ENCODE measurements at regions of chr1 and their contacts with region 1.

Region 1: GRCh38 chr1:193456811-193457280 is 270.4 kb upstream of the B3GALT2 start:
- DNase-seq: no peak
- H3K4me3 Mint-ChIP-seq: no peak overlapping the region
- H3K27ac Mint-ChIP-seq: no peak overlapping the region
- H3K4me1 Mint-ChIP-seq: peaks cover 25% of the 10 kb centered on the region
- H3K27me3 Mint-ChIP-seq: no peaks in the 10 kb centered on the region

Region 2: GRCh38 chr1:193437785-193438184 is 19.1 kb before region 1 on chr1:
- intact Hi-C with region 1: loop called (anchors 1 kb)
- DNase-seq: peak; percentile 32
- H3K4me3 Mint-ChIP-seq: peak overlapping the region; percentile 48
- H3K27ac Mint-ChIP-seq: peak overlapping the region; percentile 70
- H3K4me1 Mint-ChIP-seq: peaks cover 57% of the 10 kb centered on the region
- H3K27me3 Mint-ChIP-seq: no peaks in the 10 kb centered on the region

Region 3: DNA sequence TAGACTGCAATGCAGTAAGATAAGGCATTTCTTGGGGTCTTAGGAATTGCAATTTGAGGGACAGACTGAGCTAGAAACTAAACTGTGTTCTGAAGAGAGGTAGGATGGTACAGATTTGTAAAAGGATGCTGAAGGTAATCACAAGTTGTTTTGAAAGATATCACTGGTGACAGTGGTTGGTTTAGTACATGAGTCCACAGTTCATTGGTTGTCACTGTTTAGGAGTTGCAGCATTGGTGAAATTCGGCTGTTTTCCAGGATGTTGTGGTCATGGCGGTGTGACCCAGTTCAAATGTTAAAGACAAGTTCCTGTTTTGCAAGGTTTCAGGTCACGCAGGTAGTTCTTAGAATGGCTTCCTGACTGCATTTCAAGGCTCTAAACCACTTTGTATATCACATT is 22.3 kb after region 1 on chr1:
- intact Hi-C with region 1: loop called (anchors 1 kb)
- DNase-seq: peak; percentile 84
- H3K4me3 Mint-ChIP-seq: peak overlapping the region; percentile 30
- H3K27ac Mint-ChIP-seq: peak overlapping the region; percentile 86
- H3K4me1 Mint-ChIP-seq: peaks cover 78% of the 10 kb centered on the region
- H3K27me3 Mint-ChIP-seq: no peaks in the 10 kb centered on the region

Region 4: DNA sequence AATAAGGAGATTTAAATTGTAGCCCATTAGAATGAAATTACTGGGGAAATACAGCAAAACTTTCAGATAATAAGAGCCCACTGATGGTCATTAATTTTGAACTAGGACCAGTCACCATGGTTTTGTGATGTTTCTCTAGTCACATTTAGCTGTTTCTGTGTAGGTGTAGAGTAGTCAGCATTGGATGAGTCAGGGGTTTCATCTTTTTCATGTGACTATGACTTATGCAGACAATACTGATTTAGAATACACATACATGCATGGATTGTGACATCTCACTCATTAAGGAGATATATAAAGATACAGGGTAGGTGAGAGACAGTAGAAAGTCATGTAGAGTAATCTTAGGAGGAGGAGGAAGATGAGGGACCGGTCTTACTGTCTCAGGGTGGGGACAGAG is 1958.7 kb after region 1 on chr1:
- intact Hi-C with region 1: no loop called
- DNase-seq: no peak
- H3K4me3 Mint-ChIP-seq: no peak overlapping the region
- H3K27ac Mint-ChIP-seq: no peak overlapping the region
- H3K4me1 Mint-ChIP-seq: no peaks in the 10 kb centered on the region
- H3K27me3 Mint-ChIP-seq: no peaks in the 10 kb centered on the region